T-cell (primary cell): ENCODE measurements at regions of chr6 and their contacts with region 1.

Region 1: GRCh38 chr6:128311944-128312570 is 208.3 kb downstream of the PTPRK start:
- DNase-seq: no peak
- ATAC-seq: no peak
- H3K4me3 ChIP-seq: no peak overlapping the region
- H3K4me3 Mint-ChIP-seq: no peak overlapping the region
- H3K27ac ChIP-seq: no peak overlapping the region
- H3K27ac Mint-ChIP-seq: no peak overlapping the region
- H3K4me1 ChIP-seq: no peaks in the 10 kb centered on the region
- H3K4me1 Mint-ChIP-seq: peaks cover 0 to 8% (median 3%) of the 10 kb centered on the region in 3 donors
- H3K27me3 ChIP-seq: no peaks in the 10 kb centered on the region
- H3K27me3 Mint-ChIP-seq: no peaks in the 10 kb centered on the region

Region 2: DNA sequence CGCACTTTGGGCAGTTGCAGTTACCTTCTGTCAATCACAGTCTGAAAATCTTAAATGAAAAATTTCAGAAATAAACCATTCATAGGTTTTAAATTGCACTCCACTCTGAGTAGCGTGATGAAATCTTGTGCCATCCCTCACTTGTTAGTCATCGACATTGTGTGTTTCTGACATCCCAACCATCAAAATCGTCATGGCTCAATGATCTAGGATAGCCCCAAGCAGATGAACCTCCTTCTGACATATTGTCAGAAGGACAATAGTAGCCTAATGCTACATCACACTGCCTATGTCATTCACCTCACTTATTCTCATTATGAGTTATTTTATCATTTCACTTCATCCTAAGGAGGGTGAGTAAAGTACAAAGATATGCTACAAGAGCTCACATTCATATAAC is 76.5 kb before region 1 on chr6:
- CTCF ChIA-PET with region 1: no interaction called
- POLR2A ChIA-PET with region 1: interaction called in 1 of 2 experiments, 12 read pairs
- DNase-seq: no peak
- ATAC-seq: no peak
- H3K4me3 ChIP-seq: no peak overlapping the region
- H3K4me3 Mint-ChIP-seq: no peak overlapping the region
- H3K27ac ChIP-seq: no peak overlapping the region
- H3K27ac Mint-ChIP-seq: no peak overlapping the region
- H3K4me1 ChIP-seq: peaks cover 3 to 7% of the 10 kb centered on the region in 2 experiments
- H3K4me1 Mint-ChIP-seq: peaks cover 8 to 9% (median 8%) of the 10 kb centered on the region in 3 donors
- H3K27me3 ChIP-seq: no peaks in the 10 kb centered on the region
- H3K27me3 Mint-ChIP-seq: no peaks in the 10 kb centered on the region